ENCODE measurements at regions of chr12 and their contacts with region 1.

Region 1: DNA sequence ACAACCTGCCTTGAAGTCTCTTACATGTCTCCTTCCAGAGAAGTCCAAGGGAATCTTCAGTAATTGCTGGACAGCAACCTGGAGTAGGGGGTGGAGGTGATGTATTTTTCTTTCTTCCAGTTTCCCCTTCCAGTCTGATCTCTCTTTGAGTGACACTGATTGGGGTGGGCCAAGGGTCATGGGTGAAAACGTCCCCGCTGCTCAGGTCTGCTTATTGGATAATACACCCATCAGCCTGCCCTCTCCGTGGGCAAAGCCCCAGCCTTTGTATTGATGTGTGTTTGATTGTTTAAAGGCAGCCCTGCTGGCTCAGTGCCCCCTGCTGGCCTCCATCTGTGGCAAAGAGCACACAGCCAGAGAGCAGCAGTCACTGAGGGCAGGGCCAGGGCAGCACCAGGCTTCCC is 35.7 kb upstream of the ATP2A2 start:
- DNase-seq: no peak

Region 2: GRCh38 chr12:110224379-110225304 is 20.7 kb before region 1 on chr12:
- intact Hi-C with region 1: loop called (anchors 2 kb)
- DNase-seq: no peak